ENCODE measurements at regions of chr5 and their contacts with region 1.

Region 1: GRCh38 chr5:153402550-153402949 is 87.9 kb upstream of the GRIA1 start:
- DNase-seq: no peak
- H3K4me3 ChIP-seq: no peak overlapping the region
- H3K27ac ChIP-seq: no peak overlapping the region
- H3K4me1 ChIP-seq: peaks cover 0 to 15% of the 10 kb centered on the region in 2 donors
- H3K27me3 ChIP-seq: no peaks in the 10 kb centered on the region
- CTCF ChIP-seq: no peak

Region 2: GRCh38 chr5:153445851-153446579 is 43.5 kb after region 1 on chr5:
- intact Hi-C with region 1: loop called (anchors 5 kb)
- DNase-seq: peak in 1 of 2 donors; percentile 79
- H3K4me3 ChIP-seq: peak overlapping the region; percentile 6 to 35
- H3K27ac ChIP-seq: peak overlapping the region; percentile 70 to 73
- H3K4me1 ChIP-seq: peaks cover 0 to 12% of the 10 kb centered on the region in 2 donors
- H3K27me3 ChIP-seq: no peaks in the 10 kb centered on the region
- CTCF ChIP-seq: no peak

Region 3: DNA sequence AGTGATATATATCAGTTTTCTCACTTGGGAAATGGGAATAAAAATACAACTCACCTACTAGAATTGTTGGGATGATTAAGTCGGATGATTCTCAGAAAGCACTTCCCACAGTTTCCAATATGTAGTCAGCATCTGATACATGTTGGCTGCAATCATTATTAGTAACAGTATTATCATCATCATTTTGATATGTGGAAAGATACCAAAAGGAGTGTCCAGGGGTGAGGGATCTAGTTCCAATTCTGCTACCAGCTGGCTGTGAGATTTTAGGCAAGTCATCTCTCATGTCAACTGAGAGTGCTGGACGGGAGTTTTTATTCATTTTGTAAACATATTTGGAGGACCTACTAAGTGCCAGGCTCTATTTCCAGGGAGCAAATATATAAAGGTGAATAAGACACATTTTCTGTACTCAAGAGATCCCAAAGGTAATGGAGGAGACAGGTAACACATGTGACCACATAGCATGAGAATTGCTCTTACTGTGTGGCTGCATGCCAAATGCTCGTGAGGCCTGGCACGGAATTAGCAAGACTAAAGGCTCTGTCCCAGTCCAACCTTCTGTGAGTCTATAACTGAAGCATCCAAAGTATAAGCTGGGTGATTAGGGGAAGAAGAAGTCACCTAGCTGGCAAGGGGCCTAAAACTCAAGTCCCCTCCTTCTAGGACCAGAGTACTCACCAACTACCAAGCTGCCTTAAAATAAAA is 170.9 kb after region 1 on chr5:
- intact Hi-C with region 1: loop called (anchors 5 kb)
- DNase-seq: no peak
- H3K4me3 ChIP-seq: no peak overlapping the region
- H3K27ac ChIP-seq: peak overlapping the region; percentile 68 to 81
- H3K4me1 ChIP-seq: peaks cover 0 to 36% of the 10 kb centered on the region in 2 donors
- H3K27me3 ChIP-seq: no peaks in the 10 kb centered on the region
- CTCF ChIP-seq: no peak

Region 4: GRCh38 chr5:155091063-155091648 is 1688.6 kb after region 1 on chr5:
- intact Hi-C with region 1: no loop called
- DNase-seq: no peak
- H3K4me3 ChIP-seq: no peak overlapping the region
- H3K27ac ChIP-seq: no peak overlapping the region
- H3K4me1 ChIP-seq: peaks cover 0 to 6% of the 10 kb centered on the region in 2 donors
- H3K27me3 ChIP-seq: no peaks in the 10 kb centered on the region
- CTCF ChIP-seq: no peak

Measured in ascending aorta (tissue), 2 donors.